H1 (cell line): ENCODE measurements at regions of chr11 and their contacts with region 1.

Region 1: GRCh38 chr11:79352349-79352703 is 88.5 kb downstream of the TENM4 start:
- DNase-seq: no peak
- H3K4me3 ChIP-seq: no peak overlapping the region
- H3K27ac ChIP-seq: no peak overlapping the region
- H3K4me1 ChIP-seq: no peaks in the 10 kb centered on the region
- H3K27me3 ChIP-seq: no peaks in the 10 kb centered on the region
- CTCF ChIP-seq: no peak
- EP300 ChIP-seq: no peak
- POLR2A ChIP-seq: no peak
- RAD21 ChIP-seq: no peak

Region 2: DNA sequence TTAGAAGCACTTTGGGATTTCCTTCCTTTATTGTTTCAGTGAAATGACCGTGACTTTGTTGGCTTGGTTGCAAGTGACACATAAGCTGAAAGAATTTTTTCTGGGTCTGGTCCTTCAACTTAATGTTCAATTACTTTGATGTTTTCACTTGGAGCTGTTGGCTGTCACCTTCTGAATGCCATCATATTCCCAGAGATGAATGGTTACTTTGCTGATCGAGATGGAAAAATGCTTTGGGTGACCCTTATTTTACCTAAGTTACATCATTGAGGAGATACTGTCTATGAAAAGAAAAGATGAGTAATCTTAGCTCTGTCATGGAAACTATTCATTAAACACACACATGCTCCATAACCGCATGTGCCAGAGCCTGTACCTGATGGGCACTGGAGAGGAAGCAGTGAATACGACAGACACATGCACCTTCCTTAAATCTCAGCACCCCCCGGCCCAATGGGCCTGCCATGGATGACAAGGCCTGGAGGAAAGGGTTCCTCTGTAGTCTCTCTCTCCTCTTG is 11.6 kb after region 1 on chr11:
- CTCF ChIA-PET with region 1: interaction called, 13 read pairs
- POLR2A ChIA-PET with region 1: no interaction called
- DNase-seq: no peak
- H3K4me3 ChIP-seq: no peak overlapping the region
- H3K27ac ChIP-seq: no peak overlapping the region
- H3K4me1 ChIP-seq: no peaks in the 10 kb centered on the region; a peak in 1 of 7 replicates
- H3K27me3 ChIP-seq: no peaks in the 10 kb centered on the region
- CTCF ChIP-seq: no peak
- EP300 ChIP-seq: no peak
- POLR2A ChIP-seq: no peak
- RAD21 ChIP-seq: no peak

Region 3: DNA sequence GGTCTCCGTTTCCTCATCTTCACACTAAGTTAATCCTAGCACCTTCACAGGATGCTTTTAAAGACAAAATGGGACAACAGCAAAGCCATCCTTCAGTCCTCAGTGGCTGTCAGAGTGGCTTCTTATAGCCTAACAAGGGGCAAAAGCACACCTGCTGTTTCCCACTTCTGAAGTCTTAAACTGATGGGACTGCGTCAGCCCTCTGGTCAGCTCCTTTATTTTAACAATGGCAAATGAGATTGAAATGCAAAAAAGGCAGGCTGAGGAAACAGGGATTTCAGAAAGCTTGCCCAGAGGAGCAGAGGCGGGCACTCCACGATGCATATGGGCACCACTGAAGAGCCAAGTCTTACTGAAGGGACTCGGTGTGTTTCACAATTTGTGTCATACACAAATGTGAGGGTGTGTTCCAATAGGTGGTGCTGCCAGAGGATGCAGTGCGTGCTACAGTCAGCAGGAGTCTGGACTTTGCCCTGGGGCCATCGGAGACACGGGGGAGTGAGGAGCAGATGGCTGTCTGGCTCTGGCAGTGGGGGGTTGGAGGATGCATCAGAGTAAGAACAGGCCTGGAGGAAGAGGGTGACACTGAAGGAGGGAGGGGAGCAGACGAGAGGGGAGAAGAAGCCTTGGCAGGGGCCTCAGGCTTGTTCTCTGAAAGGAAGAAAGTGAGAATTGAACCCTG is 41.2 kb after region 1 on chr11:
- CTCF ChIA-PET with region 1: no interaction called
- POLR2A ChIA-PET with region 1: no interaction called
- DNase-seq: peak; percentile 27 to 52
- H3K4me3 ChIP-seq: peak overlapping the region in 1 of 4 experiments; percentile 13; a peak in 1 of 8 replicates
- H3K27ac ChIP-seq: no peak overlapping the region
- H3K4me1 ChIP-seq: peaks cover 0 to 12% (median 5%) of the 10 kb centered on the region in 4 experiments; a peak in 4 of 7 replicates
- H3K27me3 ChIP-seq: no peaks in the 10 kb centered on the region
- CTCF ChIP-seq: peak in 1 of 3 experiments; percentile 10; a peak in 2 of 4 replicates
- EP300 ChIP-seq: no peak
- POLR2A ChIP-seq: no peak
- RAD21 ChIP-seq: peak in 1 of 2 experiments; percentile 6; a peak in 1 of 4 replicates